Activated CD4-positive, alpha-beta T cell treated with anti-CD3 and anti-CD28 coated beads for 36 hours (primary cell): ENCODE measurements at regions of chr1 and their contacts with region 1.

Region 1: DNA sequence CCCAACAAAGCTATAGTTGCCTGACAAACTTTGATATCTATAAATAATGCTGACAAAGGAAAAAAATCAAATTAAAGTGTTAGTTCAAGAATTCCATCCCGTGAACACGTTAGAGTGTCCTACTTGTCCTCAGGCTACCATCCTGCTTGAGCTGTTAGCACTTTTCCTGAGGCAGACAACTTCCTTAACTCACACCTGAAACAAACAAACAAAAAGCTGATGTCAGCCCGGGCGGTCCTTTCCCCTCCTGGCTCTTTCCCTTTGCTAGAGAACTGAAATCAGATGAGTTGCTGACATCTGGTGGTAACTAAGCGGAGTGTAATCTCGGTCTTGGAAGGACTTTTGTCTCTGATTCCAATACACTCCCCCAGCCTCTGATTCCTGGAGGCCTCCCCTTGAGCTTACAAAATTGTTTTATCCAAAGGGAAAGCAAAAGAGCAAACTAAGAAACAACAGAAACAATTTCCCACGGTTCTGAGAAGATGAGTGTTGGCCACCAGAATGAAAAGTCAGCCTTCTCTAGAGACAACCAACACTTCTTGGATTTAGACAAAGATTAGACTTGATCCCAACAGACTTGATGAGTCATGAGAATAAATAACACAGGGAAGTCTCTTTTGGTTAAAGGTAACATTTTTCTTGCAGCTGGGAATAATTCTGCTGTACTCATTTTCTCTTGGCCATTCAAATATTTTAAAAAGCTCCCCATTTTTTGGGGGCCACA is 135.4 kb downstream of the PROX1 start:
- DNase-seq: peak; percentile 42
- ATAC-seq: peak; percentile 57
- H3K4me3 Mint-ChIP-seq: no peak overlapping the region
- H3K27ac Mint-ChIP-seq: no peak overlapping the region
- H3K4me1 Mint-ChIP-seq: peaks cover 8% of the 10 kb centered on the region
- H3K27me3 Mint-ChIP-seq: peaks cover 2% of the 10 kb centered on the region

Region 2: GRCh38 chr1:213244664-213245091 is 878.5 kb before region 1 on chr1:
- CTCF ChIA-PET with region 1: no interaction called
- POLR2A ChIA-PET with region 1: no interaction called
- intact Hi-C with region 1: loop called (anchors 2 to 5 kb)
- DNase-seq: peak; percentile 36
- ATAC-seq: no peak
- H3K4me3 Mint-ChIP-seq: no peak overlapping the region
- H3K27ac Mint-ChIP-seq: no peak overlapping the region
- H3K4me1 Mint-ChIP-seq: no peaks in the 10 kb centered on the region
- H3K27me3 Mint-ChIP-seq: no peaks in the 10 kb centered on the region

Region 3: DNA sequence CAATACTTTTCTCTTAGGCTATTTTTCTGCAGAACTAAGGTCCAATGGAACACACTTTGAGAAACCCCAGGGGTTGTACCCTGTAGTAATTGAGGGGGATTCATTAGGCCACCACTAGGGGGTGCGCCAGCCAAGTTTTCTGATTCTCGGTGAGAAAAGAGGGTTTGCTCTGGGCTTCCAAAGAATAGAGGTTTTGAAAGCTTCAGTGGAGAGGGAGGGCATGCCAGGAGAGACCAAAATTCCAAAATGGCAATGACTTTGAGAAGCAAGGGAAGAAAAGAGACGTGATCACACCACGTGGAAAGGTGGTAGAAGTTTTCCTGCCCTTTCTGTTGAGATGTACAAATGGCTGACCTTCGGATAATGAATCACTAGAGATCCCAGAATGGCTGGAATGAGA is 748.9 kb before region 1 on chr1:
- CTCF ChIA-PET with region 1: interaction called, 3 read pairs
- POLR2A ChIA-PET with region 1: no interaction called
- intact Hi-C with region 1: loop called (anchors 1 kb)
- DNase-seq: peak; percentile 82
- ATAC-seq: peak; percentile 60
- H3K4me3 Mint-ChIP-seq: no peak overlapping the region
- H3K27ac Mint-ChIP-seq: no peak overlapping the region
- H3K4me1 Mint-ChIP-seq: no peaks in the 10 kb centered on the region
- H3K27me3 Mint-ChIP-seq: no peaks in the 10 kb centered on the region

Region 4: DNA sequence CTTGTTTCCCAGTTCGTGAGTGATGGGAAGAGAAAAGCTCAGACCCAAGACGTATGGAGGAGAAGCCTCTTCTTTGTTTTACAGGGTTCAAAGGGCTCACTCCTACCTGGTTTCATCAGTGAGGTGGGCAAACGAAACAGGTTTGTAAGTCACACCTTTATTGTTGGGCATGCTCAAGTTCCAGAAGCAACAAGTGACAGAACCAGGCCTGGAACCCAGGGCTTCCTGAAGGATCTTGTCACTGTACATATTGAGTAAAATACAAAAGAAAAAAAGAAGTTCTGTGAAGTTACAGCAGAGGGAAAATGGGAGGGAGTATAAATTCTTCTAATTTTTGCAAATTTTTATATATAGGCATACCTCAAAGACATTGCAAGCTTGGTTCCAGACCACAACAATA is 456.3 kb before region 1 on chr1:
- CTCF ChIA-PET with region 1: no interaction called
- POLR2A ChIA-PET with region 1: interaction called, 9 read pairs
- intact Hi-C with region 1: loop called in 1 of 2 experiments (anchors 1 kb)
- DNase-seq: no peak
- ATAC-seq: no peak
- H3K4me3 Mint-ChIP-seq: no peak overlapping the region
- H3K27ac Mint-ChIP-seq: no peak overlapping the region
- H3K4me1 Mint-ChIP-seq: peaks cover 19% of the 10 kb centered on the region
- H3K27me3 Mint-ChIP-seq: peaks cover 3% of the 10 kb centered on the region

Region 5: GRCh38 chr1:214071469-214071868 is 51.8 kb before region 1 on chr1:
- CTCF ChIA-PET with region 1: no interaction called
- POLR2A ChIA-PET with region 1: no interaction called
- intact Hi-C with region 1: no loop called
- DNase-seq: no peak
- ATAC-seq: no peak
- H3K4me3 Mint-ChIP-seq: no peak overlapping the region
- H3K27ac Mint-ChIP-seq: no peak overlapping the region
- H3K4me1 Mint-ChIP-seq: no peaks in the 10 kb centered on the region
- H3K27me3 Mint-ChIP-seq: peaks cover 12% of the 10 kb centered on the region

Region 6: GRCh38 chr1:214248311-214249085 is 125.3 kb after region 1 on chr1:
- CTCF ChIA-PET with region 1: no interaction called
- POLR2A ChIA-PET with region 1: no interaction called
- intact Hi-C with region 1: no loop called
- DNase-seq: no peak
- ATAC-seq: no peak
- H3K4me3 Mint-ChIP-seq: no peak overlapping the region
- H3K27ac Mint-ChIP-seq: no peak overlapping the region
- H3K4me1 Mint-ChIP-seq: peaks cover 3% of the 10 kb centered on the region
- H3K27me3 Mint-ChIP-seq: peaks cover 23% of the 10 kb centered on the region